ENCODE measurements at regions of chr12 and their contacts with region 1.

Region 1: GRCh38 chr12:54439521-54440255 is 20.6 kb upstream of the ITGA5 start:
- DNase-seq: no peak
- H3K4me3 ChIP-seq: no peak overlapping the region
- H3K27ac ChIP-seq: no peak overlapping the region
- H3K4me1 ChIP-seq: no peaks in the 10 kb centered on the region
- H3K27me3 ChIP-seq: no peaks in the 10 kb centered on the region
- CTCF ChIP-seq: peak; percentile 81 to 93 (median 87)
- POLR2A ChIP-seq: no peak

Region 2: GRCh38 chr12:54404061-54405004 is 35.4 kb before region 1 on chr12:
- intact Hi-C with region 1: loop called (anchors 5 kb)
- DNase-seq: no peak
- H3K4me3 ChIP-seq: no peak overlapping the region
- H3K27ac ChIP-seq: peak overlapping the region; percentile 25 to 29
- H3K4me1 ChIP-seq: no peaks in the 10 kb centered on the region
- H3K27me3 ChIP-seq: no peaks in the 10 kb centered on the region
- CTCF ChIP-seq: peak; percentile 77 to 90 (median 86)
- POLR2A ChIP-seq: no peak